Heart left ventricle (tissue), 16 donors: ENCODE measurements at regions of chr11 and their contacts with region 1.

Region 1: DNA sequence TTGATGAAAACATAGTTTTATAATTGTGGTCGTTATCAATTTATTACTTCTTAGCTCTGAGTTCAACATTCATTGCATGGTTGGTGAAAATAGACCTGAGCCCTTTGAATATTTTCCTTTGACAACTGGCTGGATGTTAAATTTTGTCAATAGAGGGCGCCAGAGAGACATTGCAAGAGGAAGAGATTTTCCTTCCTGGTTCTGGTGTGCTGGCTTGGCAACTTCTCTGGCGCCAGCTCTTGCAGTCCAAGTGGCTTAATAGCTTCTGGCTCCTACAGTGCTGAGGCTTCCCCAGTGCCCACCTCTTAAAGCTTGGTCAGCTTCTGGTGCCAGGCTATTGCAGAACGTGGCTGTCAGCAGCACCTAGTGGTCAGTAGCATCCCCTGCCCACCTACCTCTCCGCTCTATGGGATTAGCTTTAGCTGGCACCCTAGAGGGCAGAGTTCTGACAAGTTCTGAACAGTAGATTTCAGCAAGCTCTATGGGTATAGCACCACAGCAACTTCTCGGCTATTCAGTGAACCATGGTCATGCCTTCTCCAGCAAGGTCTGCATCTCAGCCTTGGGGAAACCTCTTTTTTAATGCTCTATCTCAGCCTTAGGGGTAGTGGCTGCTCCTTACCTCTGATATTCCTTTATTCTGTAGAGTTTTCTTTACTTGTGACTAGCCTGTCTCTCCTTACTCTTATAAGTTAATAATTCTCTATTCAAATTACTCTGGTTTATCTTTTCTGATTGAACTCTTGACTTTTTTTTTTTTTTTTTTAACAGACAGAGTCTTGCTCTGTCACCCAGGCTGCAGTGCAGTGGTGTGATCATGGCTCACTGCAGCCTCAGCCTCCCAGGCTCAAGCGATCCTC is 59.4 kb downstream of the ACER3 start:
- DNase-seq: peak; percentile 68 to 84 (median 75)
- ATAC-seq: peak; percentile 78 to 93 (median 89)
- H3K4me3 ChIP-seq: peak overlapping the region in 4 of 12 donors; percentile 9 to 22 (median 14)
- H3K27ac ChIP-seq: no peak overlapping the region
- H3K4me1 ChIP-seq: peaks cover 0 to 20% (median 8%) of the 10 kb centered on the region in 12 donors
- H3K27me3 ChIP-seq: no peaks in the 10 kb centered on the region
- CTCF ChIP-seq: peak; percentile 84 to 94 (median 92)
- POLR2A ChIP-seq: no peak

Region 2: GRCh38 chr11:76734456-76735420 is 185.4 kb before region 1 on chr11:
- intact Hi-C with region 1: loop called in 9 of 10 experiments (anchors 2 to 5 kb)
- DNase-seq: no peak
- ATAC-seq: no peak
- H3K4me3 ChIP-seq: no peak overlapping the region
- H3K27ac ChIP-seq: no peak overlapping the region
- H3K4me1 ChIP-seq: peaks cover 0 to 16% (median 1%) of the 10 kb centered on the region in 12 donors
- H3K27me3 ChIP-seq: no peaks in the 10 kb centered on the region
- CTCF ChIP-seq: no peak
- POLR2A ChIP-seq: no peak

Region 3: DNA sequence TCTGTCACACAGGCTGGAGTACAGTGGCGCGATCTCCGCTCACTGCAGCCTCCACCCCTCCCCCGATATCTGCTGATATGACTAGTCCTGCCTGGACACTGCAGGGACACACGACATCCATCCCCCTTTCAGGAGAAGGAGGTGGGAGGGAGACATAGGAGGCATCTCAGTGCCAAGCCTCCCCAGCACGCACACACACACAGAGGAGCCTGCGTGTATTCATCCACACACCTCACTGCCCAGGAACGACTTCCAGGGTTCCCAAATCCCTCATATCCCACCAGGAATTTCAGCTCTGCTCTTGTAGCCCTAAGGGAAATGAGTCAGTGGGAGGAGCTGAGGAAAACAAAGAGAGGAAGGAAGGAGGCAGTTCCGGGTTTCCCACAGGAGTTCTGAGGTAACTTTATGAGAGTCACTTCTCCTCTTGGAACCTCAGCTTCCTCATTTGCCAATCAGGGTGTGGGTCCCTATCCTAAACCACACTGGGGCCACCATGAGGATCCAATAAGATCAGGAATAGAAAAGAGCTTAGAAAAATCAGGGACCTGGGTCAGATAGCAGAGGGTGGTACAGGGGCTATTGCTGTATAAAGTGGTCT is 96.5 kb before region 1 on chr11:
- intact Hi-C with region 1: no loop called
- DNase-seq: peak in 4 of 5 donors; percentile 48 to 67 (median 58)
- ATAC-seq: peak; percentile 87 to 95 (median 90)
- H3K4me3 ChIP-seq: peak overlapping the region in 8 of 12 donors; percentile 12 to 45 (median 30)
- H3K27ac ChIP-seq: peak overlapping the region; percentile 68 to 97 (median 87)
- H3K4me1 ChIP-seq: peaks cover 0 to 32% (median 14%) of the 10 kb centered on the region in 12 donors
- H3K27me3 ChIP-seq: no peaks in the 10 kb centered on the region
- CTCF ChIP-seq: no peak
- POLR2A ChIP-seq: no peak

Region 4: DNA sequence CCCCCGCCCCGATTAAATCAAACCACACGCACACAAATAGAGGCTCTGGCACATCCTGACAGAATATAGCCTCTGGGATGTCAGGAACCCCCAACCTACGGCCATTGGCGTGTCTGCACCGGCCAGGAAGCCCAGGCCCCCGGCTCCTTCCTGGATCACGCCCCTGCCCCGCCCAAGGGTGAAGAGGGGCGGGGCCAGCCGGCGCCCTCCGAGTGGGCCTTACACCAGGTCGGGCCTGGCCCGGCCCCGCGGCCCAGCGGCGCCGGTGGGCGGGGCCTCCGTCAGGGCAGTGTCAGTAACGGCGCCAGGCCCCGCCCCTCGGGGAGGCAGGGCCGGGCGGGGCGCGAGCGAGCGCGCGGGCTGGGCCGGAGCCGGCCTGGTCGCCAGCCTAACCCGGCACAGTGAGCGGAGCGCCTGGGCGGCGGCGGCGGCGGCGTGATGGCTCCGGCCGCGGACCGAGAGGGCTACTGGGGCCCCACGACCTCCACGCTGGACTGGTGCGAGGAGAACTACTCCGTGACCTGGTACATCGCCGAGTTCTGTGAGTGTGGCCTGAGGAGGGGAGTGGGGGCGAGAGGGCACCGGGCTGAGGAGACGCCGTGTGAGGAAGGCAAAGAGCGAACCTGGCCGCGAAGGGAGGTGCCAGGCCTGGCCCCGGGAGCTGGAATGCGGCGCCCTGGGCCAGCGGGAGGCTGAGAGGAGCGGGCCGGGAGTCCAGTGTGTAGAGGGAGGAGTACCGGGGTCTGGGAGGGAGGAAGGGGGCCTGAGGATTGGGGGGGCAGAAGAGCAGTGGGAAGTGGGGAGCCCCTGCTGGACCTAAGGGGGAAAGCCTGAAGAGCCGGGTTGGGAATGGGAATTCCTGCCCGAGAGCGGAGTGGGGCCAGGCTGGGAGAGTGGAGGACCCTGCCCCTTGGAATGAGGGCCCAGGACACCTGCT is 59.3 kb before region 1 on chr11 and contains the start of gene ACER3:
- intact Hi-C with region 1: loop called in 4 of 10 experiments (anchors 5 to 10 kb)
- DNase-seq: peak; percentile 93 to 97 (median 94)
- ATAC-seq: peak; percentile 95 to 100 (median 98)
- H3K4me3 ChIP-seq: peak within 1 kb of the TSS; percentile 48 to 98 (median 80)
- H3K27ac ChIP-seq: peak within 1 kb of the TSS; percentile 54 to 93 (median 88)
- H3K4me1 ChIP-seq: peaks cover 0 to 70% (median 16%) of the 10 kb centered on the region in 12 donors
- H3K27me3 ChIP-seq: no peaks in the 10 kb centered on the region
- CTCF ChIP-seq: peak in 4 of 12 donors; percentile 5 to 18 (median 10)
- POLR2A ChIP-seq: peak; percentile 72 to 85
- total RNA-seq, gene ACER3: 4.8 to 17.0 (median 12.8) TPM

Region 5: GRCh38 chr11:77039491-77040400 is 119.6 kb after region 1 on chr11:
- intact Hi-C with region 1: loop called in 4 of 10 experiments (anchors 10 kb)
- DNase-seq: peak in 1 of 5 donors; percentile 31
- ATAC-seq: peak in 3 of 4 donors; percentile 24 to 65 (median 43)
- H3K4me3 ChIP-seq: peak overlapping the region; percentile 3 to 50 (median 39)
- H3K27ac ChIP-seq: no peak overlapping the region
- H3K4me1 ChIP-seq: peaks cover 0 to 12% (median 7%) of the 10 kb centered on the region in 12 donors
- H3K27me3 ChIP-seq: peaks cover 13 to 65% (median 33%) of the 10 kb centered on the region in 9 donors
- CTCF ChIP-seq: peak in 10 of 12 donors; percentile 13 to 48 (median 36)
- POLR2A ChIP-seq: no peak

Region 6: DNA sequence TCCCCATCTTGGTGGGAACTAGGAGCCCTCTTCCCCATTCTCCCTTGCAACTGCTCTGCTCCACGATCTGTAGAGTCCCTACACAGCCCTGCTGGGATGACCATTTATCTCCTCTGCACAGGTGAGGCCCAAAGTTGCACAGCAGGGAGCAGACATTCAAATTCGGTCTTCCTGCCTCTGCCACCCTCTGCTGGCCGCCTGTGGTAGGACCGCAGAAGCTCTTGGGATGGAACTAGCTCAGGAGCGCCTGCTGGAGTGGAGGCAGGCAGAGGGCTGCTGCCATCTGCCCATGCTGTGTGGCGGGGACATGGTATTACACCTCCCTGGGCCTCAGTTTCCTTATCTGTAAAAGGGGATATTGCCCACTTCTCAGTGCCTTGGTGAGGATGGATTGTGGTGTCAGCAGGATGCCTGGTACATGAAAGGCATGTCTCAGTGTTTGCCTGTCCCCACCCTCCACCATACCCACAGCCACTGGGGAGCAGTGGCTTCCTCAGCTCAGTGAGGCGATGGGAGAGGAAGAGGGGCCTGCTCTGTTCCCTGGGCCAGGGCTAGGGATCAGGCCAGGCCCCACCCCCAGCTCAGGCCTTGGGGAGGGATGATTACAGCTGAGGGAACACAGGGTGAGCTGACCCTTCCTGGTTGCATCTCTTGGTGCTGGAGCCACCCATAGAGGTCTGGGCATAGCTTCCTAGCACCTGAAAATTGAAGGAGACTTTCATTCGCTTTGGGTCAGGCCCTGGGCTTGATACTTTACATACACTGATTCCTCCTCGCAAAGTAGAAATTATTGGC is 171.2 kb after region 1 on chr11:
- intact Hi-C with region 1: loop called in 6 of 10 experiments (anchors 2 to 10 kb)
- DNase-seq: peak; percentile 66 to 88 (median 73)
- ATAC-seq: peak; percentile 59 to 80 (median 76)
- H3K4me3 ChIP-seq: no peak overlapping the region
- H3K27ac ChIP-seq: no peak overlapping the region
- H3K4me1 ChIP-seq: peaks cover 0 to 1% (median 0%) of the 10 kb centered on the region in 12 donors
- H3K27me3 ChIP-seq: no peaks in the 10 kb centered on the region
- CTCF ChIP-seq: peak; percentile 83 to 95 (median 90)
- POLR2A ChIP-seq: no peak